Gastrocnemius medialis (tissue), 4 donors: ENCODE measurements at regions of chr3 and their contacts with region 1.

Region 1: GRCh38 chr3:101573449-101574387 is at the start of gene PCNP:
- DNase-seq: peak; percentile 98
- ATAC-seq: peak; percentile 96 to 97
- H3K4me3 ChIP-seq: peak within 1 kb of the TSS; percentile 64 to 92 (median 81)
- H3K27ac ChIP-seq: peak within 1 kb of the TSS; percentile 94 to 97 (median 96)
- H3K4me1 ChIP-seq: peaks cover 41 to 43% of the 10 kb centered on the region in 2 donors
- H3K27me3 ChIP-seq: no peaks in the 10 kb centered on the region
- CTCF ChIP-seq: peak; percentile 87 to 95 (median 93)
- POLR2A ChIP-seq: peak; percentile 79 to 87
- total RNA-seq, gene PCNP: 57.6 to 68.6 (median 63.2) TPM

Region 2: DNA sequence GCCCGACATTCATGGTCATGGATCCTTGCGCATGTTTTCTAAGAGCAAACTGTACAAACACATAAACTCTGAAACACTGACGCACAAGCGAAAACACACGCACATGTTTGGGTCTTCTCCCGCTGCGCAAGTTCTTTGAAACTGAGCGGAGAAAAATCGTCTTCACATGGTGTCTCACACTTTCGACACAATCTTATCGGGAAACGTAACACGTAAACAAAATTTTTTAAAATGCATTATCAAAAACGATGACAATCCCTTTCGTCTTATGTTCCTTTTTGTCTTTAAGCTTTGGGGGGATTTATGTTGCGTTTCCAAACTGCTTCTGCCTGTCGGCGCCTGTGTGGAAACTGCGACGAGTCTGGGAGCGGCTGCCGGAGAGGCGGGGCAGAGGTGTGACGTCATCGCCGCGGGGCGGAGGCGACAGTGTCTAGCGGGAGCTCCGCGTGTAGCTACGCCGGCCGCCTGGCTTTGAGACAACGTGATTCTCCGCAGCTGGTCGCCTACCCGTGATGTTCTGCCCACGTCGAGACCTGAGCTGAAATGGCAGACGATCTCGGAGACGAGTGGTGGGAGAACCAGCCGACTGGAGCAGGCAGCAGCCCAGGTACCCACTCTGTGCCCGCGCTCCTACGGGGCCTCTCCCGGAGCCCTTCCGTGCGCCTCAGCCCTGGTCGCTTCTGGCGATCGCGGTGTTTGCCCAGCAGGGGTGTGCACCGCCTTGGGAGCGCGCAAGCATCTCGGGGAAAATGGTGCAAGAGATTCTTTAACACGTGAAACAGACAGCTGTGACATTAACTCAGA is 1756.1 kb before region 1 on chr3 and contains the start of gene CMSS1:
- in situ Hi-C with region 1: no loop called
- intact Hi-C with region 1: loop called (anchors 10 kb)
- DNase-seq: peak; percentile 91 to 92
- ATAC-seq: peak; percentile 90
- H3K4me3 ChIP-seq: peak within 1 kb of the TSS; percentile 67 to 78 (median 69)
- H3K27ac ChIP-seq: peak within 1 kb of the TSS; percentile 89 to 98 (median 91)
- H3K4me1 ChIP-seq: peaks cover 26 to 38% of the 10 kb centered on the region in 2 donors
- H3K27me3 ChIP-seq: no peaks in the 10 kb centered on the region
- CTCF ChIP-seq: peak; percentile 37 to 51 (median 47)
- POLR2A ChIP-seq: peak; percentile 83
- total RNA-seq, gene CMSS1: 23.2 to 89.5 (median 67.6) TPM

Region 3: DNA sequence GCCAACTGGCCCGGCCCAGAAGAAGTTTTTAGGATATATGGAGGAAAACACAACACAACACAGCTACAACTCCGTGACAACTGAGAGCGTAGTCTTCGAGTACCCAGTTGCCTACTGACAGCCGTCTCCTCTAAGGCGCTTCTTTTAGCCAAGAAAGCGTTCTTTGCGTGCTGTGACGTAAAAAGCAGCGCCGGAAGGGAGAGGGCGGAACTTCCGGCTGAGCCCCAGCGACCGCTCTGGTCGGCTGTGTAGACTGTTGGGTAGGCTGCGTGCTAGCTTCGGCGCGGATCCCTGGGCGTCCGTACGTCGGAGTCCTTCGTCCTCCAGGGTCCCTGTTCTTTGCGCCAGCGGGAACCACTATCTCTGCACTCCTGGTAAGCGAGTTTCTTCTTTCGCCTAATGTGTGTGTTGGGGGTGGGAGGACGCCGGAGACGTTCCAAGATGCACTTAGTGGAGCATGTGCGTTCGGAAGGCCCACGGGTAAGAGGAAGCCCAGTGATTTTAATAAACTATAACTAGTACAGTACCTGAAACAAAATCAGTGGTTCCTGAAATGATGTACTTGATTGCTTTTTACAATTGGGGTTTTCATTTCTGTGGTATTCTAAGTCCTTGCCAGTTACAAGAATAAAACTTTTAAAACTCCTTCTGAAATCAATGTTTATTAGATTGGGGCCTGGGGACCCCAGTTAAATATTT is 11.9 kb before region 1 on chr3 and contains the start of gene TRMT10C:
- in situ Hi-C with region 1: no loop called
- intact Hi-C with region 1: loop called (anchors 1 kb)
- DNase-seq: peak; percentile 82 to 90
- ATAC-seq: peak; percentile 99 to 100
- H3K4me3 ChIP-seq: peak within 1 kb of the TSS; percentile 85 to 99 (median 94)
- H3K27ac ChIP-seq: peak within 1 kb of the TSS; percentile 87 to 93 (median 92)
- H3K4me1 ChIP-seq: peaks cover 13 to 16% of the 10 kb centered on the region in 2 donors
- H3K27me3 ChIP-seq: peaks cover 0 to 21% (median 11%) of the 10 kb centered on the region in 3 donors
- CTCF ChIP-seq: no peak
- POLR2A ChIP-seq: peak; percentile 73 to 83
- total RNA-seq, gene TRMT10C: 17.9 to 33.2 (median 26.2) TPM

Region 4: GRCh38 chr3:101685870-101686412 is 112.2 kb after region 1 on chr3:
- in situ Hi-C with region 1: loop called in 2 of 4 experiments (anchors 5 to 10 kb)
- intact Hi-C with region 1: no loop called
- DNase-seq: no peak
- ATAC-seq: peak; percentile 9 to 10
- H3K4me3 ChIP-seq: peak overlapping the region; percentile 74 to 93 (median 85)
- H3K27ac ChIP-seq: peak overlapping the region; percentile 93 to 97 (median 96)
- H3K4me1 ChIP-seq: peaks cover 26 to 36% of the 10 kb centered on the region in 2 donors
- H3K27me3 ChIP-seq: no peaks in the 10 kb centered on the region
- CTCF ChIP-seq: no peak
- POLR2A ChIP-seq: no peak

Region 5: GRCh38 chr3:101779047-101779821 is 205.5 kb after region 1 on chr3 and contains the start of gene NXPE3:
- in situ Hi-C with region 1: no loop called
- intact Hi-C with region 1: loop called (anchors 1 kb)
- DNase-seq: peak; percentile 93 to 94
- ATAC-seq: peak; percentile 76 to 87
- H3K4me3 ChIP-seq: peak within 1 kb of the TSS; percentile 74 to 84 (median 77)
- H3K27ac ChIP-seq: peak within 1 kb of the TSS; percentile 89 to 94 (median 90)
- H3K4me1 ChIP-seq: peaks cover 38 to 49% of the 10 kb centered on the region in 2 donors
- H3K27me3 ChIP-seq: no peaks in the 10 kb centered on the region
- CTCF ChIP-seq: no peak
- POLR2A ChIP-seq: peak; percentile 77
- total RNA-seq, gene NXPE3: 31.5 to 52.0 (median 44.5) TPM